ENCODE measurements at regions of chr3 and their contacts with region 1.

Region 1: GRCh38 chr3:58237238-58237940 is at the start of gene ABHD6:
- DNase-seq: no peak
- ATAC-seq: peak; percentile 79
- H3K4me3 ChIP-seq: peak within 1 kb of the TSS; percentile 68
- H3K27ac ChIP-seq: peak within 1 kb of the TSS; percentile 44
- H3K4me1 ChIP-seq: peaks cover 13% of the 10 kb centered on the region
- H3K27me3 ChIP-seq: no peaks in the 10 kb centered on the region
- CTCF ChIP-seq: peak; percentile 33 to 58 (median 37); a peak in 5 of 6 replicates
- EP300 ChIP-seq: no peak
- POLR2A ChIP-seq: peak; percentile 48
- RAD21 ChIP-seq: peak; percentile 61
- polyA plus RNA-seq, gene ABHD6: 1.4 to 1.5 TPM

Region 2: DNA sequence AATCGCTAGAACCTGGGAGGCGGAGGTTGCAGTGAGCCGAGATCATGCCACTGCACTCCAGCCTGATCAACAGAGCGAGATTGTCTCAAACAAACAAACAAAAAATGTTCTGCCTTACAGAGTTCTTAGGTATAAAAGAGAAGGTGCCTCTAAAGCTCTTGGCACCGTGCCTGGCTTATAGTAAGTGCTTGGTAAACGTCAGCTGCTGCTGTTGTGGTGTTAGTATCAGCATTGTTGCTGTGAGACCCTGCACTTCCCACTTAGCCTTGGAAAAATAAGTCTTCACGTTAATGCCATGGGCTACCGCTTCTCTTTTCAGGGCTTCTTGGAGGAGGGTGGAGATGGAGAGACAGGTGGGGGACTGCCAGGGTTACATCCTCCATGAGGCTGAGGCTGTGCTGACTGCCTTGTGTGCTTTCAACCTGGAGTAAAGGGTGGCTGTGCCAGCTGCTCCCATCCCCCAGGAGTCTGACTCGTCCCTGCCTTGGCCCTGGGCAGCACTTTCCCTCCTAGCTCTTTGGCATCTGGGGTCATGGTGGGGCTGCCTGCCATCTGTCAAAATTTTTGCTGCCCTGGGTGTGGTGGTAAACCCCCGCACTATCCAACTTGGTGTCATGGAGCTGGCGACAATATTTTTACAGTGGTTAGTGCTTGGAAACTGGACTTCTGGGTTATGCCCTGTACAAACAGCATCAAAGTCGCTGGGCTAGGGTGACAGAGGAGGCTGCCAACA is 211.4 kb before region 1 on chr3:
- CTCF ChIA-PET with region 1: no interaction called
- POLR2A ChIA-PET with region 1: no interaction called
- RAD21 ChIA-PET with region 1: no interaction called
- SMC1A ChIA-PET with region 1: no interaction called
- in situ Hi-C with region 1: no loop called
- intact Hi-C with region 1: no loop called
- DNase-seq: no peak
- ATAC-seq: no peak
- H3K4me3 ChIP-seq: no peak overlapping the region
- H3K27ac ChIP-seq: no peak overlapping the region
- H3K4me1 ChIP-seq: peaks cover 13% of the 10 kb centered on the region
- H3K27me3 ChIP-seq: no peaks in the 10 kb centered on the region
- CTCF ChIP-seq: no peak
- EP300 ChIP-seq: no peak
- POLR2A ChIP-seq: no peak
- RAD21 ChIP-seq: no peak

Region 3: GRCh38 chr3:58200846-58201355 is 36.5 kb before region 1 on chr3:
- CTCF ChIA-PET with region 1: interaction called, 11 read pairs
- POLR2A ChIA-PET with region 1: interaction called, 72 read pairs
- RAD21 ChIA-PET with region 1: interaction called, 33 read pairs
- SMC1A ChIA-PET with region 1: interaction called, 67 read pairs
- in situ Hi-C with region 1: no loop called
- intact Hi-C with region 1: no loop called
- DNase-seq: no peak
- ATAC-seq: peak; percentile 53
- H3K4me3 ChIP-seq: no peak overlapping the region; the same call in 1 of the 2 replicates
- H3K27ac ChIP-seq: peak overlapping the region; percentile 73
- H3K4me1 ChIP-seq: peaks cover 46% of the 10 kb centered on the region
- H3K27me3 ChIP-seq: no peaks in the 10 kb centered on the region
- CTCF ChIP-seq: no peak
- EP300 ChIP-seq: no peak
- POLR2A ChIP-seq: 0 out of 2 replicates have a peak, but pooled peaks have one; percentile 25
- RAD21 ChIP-seq: no peak

Region 4: GRCh38 chr3:58206406-58207011 is 30.9 kb before region 1 on chr3:
- CTCF ChIA-PET with region 1: interaction called, 4 read pairs
- POLR2A ChIA-PET with region 1: interaction called, 72 read pairs
- RAD21 ChIA-PET with region 1: interaction called, 30 read pairs
- SMC1A ChIA-PET with region 1: interaction called, 228 read pairs
- in situ Hi-C with region 1: no loop called
- intact Hi-C with region 1: no loop called
- DNase-seq: no peak
- ATAC-seq: peak; percentile 58
- H3K4me3 ChIP-seq: no peak overlapping the region
- H3K27ac ChIP-seq: peak overlapping the region; percentile 6; the same call in 1 of the 2 replicates
- H3K4me1 ChIP-seq: peaks cover 23% of the 10 kb centered on the region
- H3K27me3 ChIP-seq: no peaks in the 10 kb centered on the region
- CTCF ChIP-seq: no peak
- EP300 ChIP-seq: no peak
- POLR2A ChIP-seq: no peak
- RAD21 ChIP-seq: no peak

Region 5: GRCh38 chr3:58249358-58250092 is 12.1 kb after region 1 on chr3:
- CTCF ChIA-PET with region 1: interaction called, 8 read pairs
- POLR2A ChIA-PET with region 1: interaction called, 6 read pairs
- RAD21 ChIA-PET with region 1: interaction called, 7 read pairs
- SMC1A ChIA-PET with region 1: interaction called, 16 read pairs
- in situ Hi-C with region 1: no loop called
- intact Hi-C with region 1: no loop called
- DNase-seq: no peak
- ATAC-seq: peak; percentile 89
- H3K4me3 ChIP-seq: no peak overlapping the region
- H3K27ac ChIP-seq: no peak overlapping the region
- H3K4me1 ChIP-seq: peaks cover 9% of the 10 kb centered on the region
- H3K27me3 ChIP-seq: no peaks in the 10 kb centered on the region
- CTCF ChIP-seq: no peak; a peak in 1 of 6 replicates
- EP300 ChIP-seq: no peak
- POLR2A ChIP-seq: no peak
- RAD21 ChIP-seq: 0 out of 2 replicates have a peak, but pooled peaks have one; percentile 8

Region 6: DNA sequence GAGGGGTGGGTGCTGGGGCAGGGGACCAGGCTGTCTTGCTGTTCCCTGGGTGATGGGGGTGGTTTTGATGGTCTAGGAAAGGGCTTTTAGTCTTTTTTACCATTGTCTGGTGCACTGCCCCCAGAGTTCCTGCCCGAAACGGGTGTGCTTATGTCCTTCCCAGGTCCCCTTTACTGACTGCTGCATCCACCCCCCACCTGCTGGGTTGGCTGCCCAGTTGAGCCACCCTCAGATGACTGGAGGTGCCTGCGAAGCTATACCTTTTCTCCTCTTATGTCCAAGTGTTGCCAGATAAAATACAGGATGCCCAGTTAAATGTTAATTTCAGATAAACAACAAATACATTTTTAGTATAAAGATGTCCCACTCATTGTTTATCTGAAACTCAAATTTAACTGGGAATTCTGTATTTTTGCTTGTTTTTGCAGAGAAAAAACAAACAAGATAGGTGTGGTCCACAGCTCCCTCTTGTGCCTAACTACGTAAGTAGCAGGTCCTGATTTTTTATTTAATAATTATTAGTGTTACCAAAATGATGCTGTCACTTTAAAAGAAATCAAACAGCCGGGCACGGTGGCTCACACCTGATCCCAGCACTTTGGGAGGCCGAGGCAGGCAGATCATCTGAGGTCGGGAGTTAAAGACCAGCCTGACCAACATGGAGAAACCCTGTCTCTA is 62.6 kb after region 1 on chr3:
- CTCF ChIA-PET with region 1: interaction called, 37 read pairs
- POLR2A ChIA-PET with region 1: no interaction called
- RAD21 ChIA-PET with region 1: interaction called, 12 read pairs
- SMC1A ChIA-PET with region 1: interaction called, 12 read pairs
- in situ Hi-C with region 1: no loop called
- intact Hi-C with region 1: loop called (anchors 5 kb)
- DNase-seq: no peak
- ATAC-seq: peak; percentile 59
- H3K4me3 ChIP-seq: no peak overlapping the region
- H3K27ac ChIP-seq: no peak overlapping the region
- H3K4me1 ChIP-seq: no peaks in the 10 kb centered on the region
- H3K27me3 ChIP-seq: no peaks in the 10 kb centered on the region; a peak in 1 of 4 replicates
- CTCF ChIP-seq: peak; percentile 48 to 59 (median 51); a peak in 5 of 6 replicates
- EP300 ChIP-seq: no peak
- POLR2A ChIP-seq: no peak
- RAD21 ChIP-seq: peak; percentile 74

Region 7: DNA sequence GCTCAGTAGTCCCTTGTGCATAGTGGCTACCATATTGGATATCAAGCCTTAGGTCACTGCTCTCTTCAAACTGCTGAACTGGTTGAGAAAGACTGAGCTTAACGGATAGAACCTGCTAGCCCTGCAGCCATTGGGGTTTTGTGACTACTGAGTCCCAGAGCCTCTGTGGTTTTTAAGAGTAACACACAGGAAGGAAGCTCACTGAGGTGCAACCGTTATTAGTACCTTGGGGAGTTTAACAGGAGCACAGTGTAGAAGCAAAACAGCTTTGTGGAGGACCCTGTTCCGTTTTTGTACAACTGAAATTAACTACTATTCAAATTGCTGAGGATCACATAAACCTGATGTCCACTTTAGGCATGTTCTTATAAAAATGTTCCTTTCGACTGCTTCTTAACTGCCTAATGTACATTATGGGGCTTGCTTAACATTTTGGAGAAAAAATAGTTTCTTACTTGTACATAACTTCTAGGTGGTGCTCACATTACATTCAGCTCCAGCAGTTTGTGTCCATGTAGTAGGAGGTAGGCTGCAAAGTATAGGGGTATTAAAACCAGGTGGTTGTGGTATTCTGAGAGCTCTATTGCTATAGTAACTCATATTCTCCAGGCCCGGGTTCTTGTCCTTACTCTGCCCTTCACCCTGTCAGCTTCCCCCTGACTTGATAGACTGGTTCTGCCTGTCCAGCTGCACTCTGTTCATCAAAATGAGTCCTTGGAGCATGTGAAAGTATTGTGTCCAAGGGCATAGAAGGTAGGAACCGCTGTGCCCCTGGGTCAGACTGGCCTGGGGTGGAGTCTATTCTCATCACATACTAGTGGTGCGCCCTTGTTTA is 112.6 kb after region 1 on chr3:
- CTCF ChIA-PET with region 1: no interaction called
- POLR2A ChIA-PET with region 1: interaction called, 10 read pairs
- RAD21 ChIA-PET with region 1: interaction called, 3 read pairs
- SMC1A ChIA-PET with region 1: interaction called, 3 read pairs
- in situ Hi-C with region 1: no loop called
- intact Hi-C with region 1: no loop called
- DNase-seq: peak; percentile 87
- ATAC-seq: peak; percentile 88
- H3K4me3 ChIP-seq: peak overlapping the region; percentile 9; the same call in 1 of the 2 replicates
- H3K27ac ChIP-seq: peak overlapping the region; percentile 85
- H3K4me1 ChIP-seq: peaks cover 55% of the 10 kb centered on the region
- H3K27me3 ChIP-seq: no peaks in the 10 kb centered on the region
- CTCF ChIP-seq: no peak
- EP300 ChIP-seq: 0 out of 4 replicates have a peak, but pooled peaks of 1 of the 2 experiments have one; percentile 18
- POLR2A ChIP-seq: peak; percentile 60
- RAD21 ChIP-seq: no peak